ENCODE measurements at regions of chr2 and their contacts with region 1.

Region 1: GRCh38 chr2:88055371-88056128 is at the start of gene KRCC1:
- DNase-seq: peak; percentile 93 to 96
- ATAC-seq: peak; percentile 90 to 92
- H3K4me3 ChIP-seq: peak within 1 kb of the TSS; percentile 72 to 97 (median 91)
- H3K27ac ChIP-seq: peak within 1 kb of the TSS; percentile 96 to 99 (median 98)
- H3K4me1 ChIP-seq: peaks cover 33 to 41% of the 10 kb centered on the region in 2 donors
- H3K27me3 ChIP-seq: no peaks in the 10 kb centered on the region
- CTCF ChIP-seq: peak in 1 of 5 experiments; percentile 26
- POLR2A ChIP-seq: peak; percentile 94 to 95
- total RNA-seq, gene KRCC1: 20.0 to 29.5 (median 27.2) TPM

Region 2: DNA sequence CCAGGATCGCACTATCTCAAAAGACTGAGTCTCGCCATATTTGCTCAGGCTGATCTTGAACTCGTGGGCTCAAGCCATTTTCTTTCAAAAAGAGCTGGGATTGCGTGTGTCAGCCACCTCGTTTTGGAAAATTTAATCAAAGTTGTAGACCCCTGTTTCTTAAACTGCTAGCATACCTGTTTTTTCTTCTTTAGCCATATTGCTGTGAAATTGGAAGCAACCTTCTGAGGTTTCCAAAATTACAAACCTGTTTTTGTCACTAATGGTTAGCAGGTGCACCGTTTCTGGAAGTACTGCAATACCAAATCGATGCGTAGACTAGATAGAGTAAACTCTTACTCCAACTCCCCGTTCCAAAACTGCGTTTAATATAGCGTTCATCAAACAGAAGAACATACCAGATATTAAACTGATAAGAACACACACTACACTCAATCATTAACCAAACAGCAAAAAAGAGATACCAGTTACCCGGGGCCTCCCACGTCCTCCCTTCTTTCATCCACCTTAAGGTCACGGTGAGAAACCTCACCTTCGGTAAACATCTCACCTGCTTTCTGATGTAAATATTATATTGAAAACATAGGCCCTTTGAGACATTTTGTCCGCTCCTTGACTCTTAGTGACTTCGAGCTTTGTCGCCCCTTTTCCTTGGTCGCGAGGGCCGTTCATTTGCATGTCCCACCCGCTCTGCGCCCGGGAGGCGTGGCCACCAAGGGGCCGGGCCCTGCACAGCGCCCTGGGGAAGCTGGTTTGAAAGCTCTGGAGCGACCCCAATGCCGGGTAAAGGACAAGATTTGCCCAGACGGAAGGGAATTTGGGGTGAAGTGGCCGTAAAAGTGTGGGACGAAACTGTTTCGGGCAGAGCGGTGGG is 39.2 kb before region 1 on chr2 and contains the start of gene RNU2-63P:
- in situ Hi-C with region 1: no loop called
- intact Hi-C with region 1: loop called (anchors 2 kb)
- DNase-seq: peak; percentile 13 to 56
- ATAC-seq: peak; percentile 87 to 97
- H3K4me3 ChIP-seq: peak within 1 kb of the TSS; percentile 63 to 72 (median 66)
- H3K27ac ChIP-seq: peak within 1 kb of the TSS in 3 of 4 donors; percentile 6 to 67 (median 67)
- H3K4me1 ChIP-seq: no peaks in the 10 kb centered on the region
- H3K27me3 ChIP-seq: no peaks in the 10 kb centered on the region
- CTCF ChIP-seq: no peak
- POLR2A ChIP-seq: peak; percentile 56 to 83
- total RNA-seq, gene RNU2-63P: not detected

Region 3: GRCh38 chr2:88159955-88160415 is 104.4 kb after region 1 on chr2:
- in situ Hi-C with region 1: loop called (anchors 5 kb)
- intact Hi-C with region 1: loop called (anchors 1 kb)
- DNase-seq: peak in 1 of 2 donors; percentile 57
- ATAC-seq: peak; percentile 84 to 95
- H3K4me3 ChIP-seq: no peak overlapping the region
- H3K27ac ChIP-seq: peak overlapping the region in 2 of 4 donors; percentile 0 to 15
- H3K4me1 ChIP-seq: peaks cover 8 to 17% of the 10 kb centered on the region in 2 donors
- H3K27me3 ChIP-seq: no peaks in the 10 kb centered on the region
- CTCF ChIP-seq: peak; percentile 80 to 89 (median 84)
- POLR2A ChIP-seq: no peak

Region 4: DNA sequence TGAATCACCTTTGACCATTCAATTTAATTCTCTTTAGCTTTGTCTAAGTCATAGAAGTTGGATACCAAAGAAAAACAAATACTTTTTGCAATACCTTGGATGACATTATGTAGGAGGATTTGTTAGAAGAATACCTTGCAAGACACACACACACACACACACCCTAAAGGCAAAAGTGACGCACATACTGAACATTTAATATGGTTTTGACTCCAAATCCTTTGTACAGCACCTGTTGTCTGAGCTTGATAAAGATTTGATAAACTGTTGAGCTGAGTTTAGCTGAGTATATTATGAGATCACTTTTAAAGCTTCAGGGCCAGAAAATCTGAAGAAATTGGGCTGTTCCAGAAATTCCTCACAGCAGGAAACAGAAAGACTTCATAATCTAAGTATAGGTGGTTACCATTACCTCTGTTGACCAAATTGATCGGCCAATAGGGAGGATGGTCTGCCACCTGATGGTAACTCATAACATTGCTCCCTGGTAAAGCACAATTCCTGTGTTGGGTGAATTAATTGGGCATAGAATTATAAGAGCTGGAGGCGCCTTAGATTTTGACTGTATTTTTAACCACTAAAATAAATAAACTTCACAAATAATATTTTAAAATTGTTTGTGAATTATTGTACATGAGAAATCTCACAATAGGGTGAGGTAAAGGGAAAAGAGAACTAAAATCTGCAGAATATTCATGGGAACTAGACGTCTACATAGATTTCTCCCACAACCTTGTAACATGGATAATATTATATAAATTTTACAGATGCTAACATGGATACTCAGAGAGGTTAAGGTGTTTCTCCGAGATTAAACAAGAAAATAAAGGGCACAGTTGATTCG is 614.0 kb after region 1 on chr2:
- in situ Hi-C with region 1: loop called in 1 of 4 experiments (anchors 25 kb)
- intact Hi-C with region 1: no loop called
- DNase-seq: no peak
- ATAC-seq: peak; percentile 83 to 93
- H3K4me3 ChIP-seq: no peak overlapping the region
- H3K27ac ChIP-seq: peak overlapping the region in 1 of 4 donors; percentile 39
- H3K4me1 ChIP-seq: peaks cover 4 to 6% of the 10 kb centered on the region in 2 donors
- H3K27me3 ChIP-seq: no peaks in the 10 kb centered on the region
- CTCF ChIP-seq: peak; percentile 64 to 79 (median 72)
- POLR2A ChIP-seq: no peak